ENCODE measurements at regions of chr1 and their contacts with region 1.

Region 1: GRCh38 chr1:92367496-92367895 is 68.6 kb downstream of the RPAP2 start:
- DNase-seq: no peak
- ATAC-seq: peak; percentile 55
- H3K4me3 Mint-ChIP-seq: no peak overlapping the region
- H3K27ac Mint-ChIP-seq: no peak overlapping the region
- H3K4me1 Mint-ChIP-seq: peaks cover 42% of the 10 kb centered on the region
- H3K27me3 Mint-ChIP-seq: no peaks in the 10 kb centered on the region

Region 2: DNA sequence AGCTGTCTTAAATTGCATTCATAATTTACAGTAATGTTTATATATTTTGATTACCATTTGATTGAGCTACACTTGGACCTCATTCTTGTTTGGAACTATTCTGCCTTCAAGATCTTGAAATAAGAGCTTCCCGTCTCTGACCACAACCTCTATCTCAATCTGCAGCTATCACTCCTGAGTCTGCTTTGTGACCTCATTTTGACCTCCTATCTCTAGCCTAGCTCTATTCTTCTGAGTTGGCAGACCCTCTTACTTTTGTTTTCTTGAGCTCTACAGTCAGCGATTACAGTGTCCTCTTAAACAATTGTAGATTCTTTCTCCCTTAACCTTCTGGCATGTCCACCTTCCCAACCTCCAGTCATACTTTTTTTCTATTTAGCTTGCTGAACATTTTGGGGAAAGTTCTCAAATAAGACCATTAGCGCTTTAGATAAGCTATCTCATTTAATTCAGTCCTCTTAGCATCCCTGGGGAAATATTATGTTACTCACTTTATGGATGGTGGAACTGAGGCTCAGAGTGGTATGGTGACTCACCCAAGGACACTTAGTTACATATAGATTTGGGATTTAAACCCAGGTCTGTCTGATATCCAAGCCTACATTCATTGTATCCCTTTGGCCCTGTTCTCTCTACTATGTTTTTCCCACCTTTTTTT is 49.5 kb before region 1 on chr1:
- CTCF ChIA-PET with region 1: no interaction called
- POLR2A ChIA-PET with region 1: no interaction called
- intact Hi-C with region 1: loop called in 1 of 2 experiments (anchors 2 kb)
- DNase-seq: no peak
- ATAC-seq: peak; percentile 65
- H3K4me3 Mint-ChIP-seq: no peak overlapping the region
- H3K27ac Mint-ChIP-seq: peak overlapping the region; percentile 52
- H3K4me1 Mint-ChIP-seq: peaks cover 58% of the 10 kb centered on the region
- H3K27me3 Mint-ChIP-seq: no peaks in the 10 kb centered on the region

Measured in activated CD4-positive, alpha-beta T cell treated with anti-CD3 and anti-CD28 coated beads for 36 hours (primary cell).